Caco-2 (cell line): ENCODE measurements at regions of chr10 and their contacts with region 1.

Region 1: DNA sequence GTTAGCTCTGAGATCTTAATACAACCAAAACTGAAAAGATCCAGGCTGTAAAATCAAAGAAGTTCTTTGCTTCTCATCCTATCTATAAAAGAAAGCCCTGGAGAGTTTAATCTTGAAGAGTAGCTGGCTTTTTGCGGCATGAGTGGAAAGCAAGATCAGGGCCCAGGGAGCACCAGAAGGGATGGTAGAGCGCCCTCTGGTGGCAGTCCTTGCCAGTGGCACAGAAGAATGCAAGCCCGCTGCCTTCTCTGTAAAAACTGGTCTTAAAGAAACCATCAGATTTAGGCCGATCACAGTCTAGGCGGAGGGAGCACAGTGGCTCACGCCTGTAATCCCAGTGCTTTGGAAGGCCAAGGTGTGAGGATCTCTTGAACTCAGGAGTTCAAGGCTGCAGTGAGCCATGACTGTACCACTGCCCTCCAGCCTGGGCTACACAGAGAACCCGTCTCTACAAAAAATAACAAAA is 35.6 kb downstream of the CPN1 start:
- DNase-seq: peak; percentile 84 to 87
- H3K4me3 ChIP-seq: no peak overlapping the region
- H3K4me3 Mint-ChIP-seq: no peak overlapping the region
- H3K27ac Mint-ChIP-seq: no peak overlapping the region
- H3K4me1 ChIP-seq: 0 out of 2 replicates have a peak, but pooled peaks cover 11% of the 10 kb centered on the region
- H3K4me1 Mint-ChIP-seq: peaks cover 7% of the 10 kb centered on the region
- H3K27me3 ChIP-seq: no peaks in the 10 kb centered on the region
- H3K27me3 Mint-ChIP-seq: no peaks in the 10 kb centered on the region
- CTCF ChIP-seq: peak; percentile 95 to 97

Region 2: GRCh38 chr10:99845837-99846382 is 200.1 kb before region 1 on chr10:
- CTCF ChIA-PET with region 1: interaction called, 16 read pairs
- POLR2A ChIA-PET with region 1: no interaction called
- intact Hi-C with region 1: loop called (anchors 1 kb)
- DNase-seq: peak; percentile 74 to 75
- H3K4me3 ChIP-seq: no peak overlapping the region
- H3K4me3 Mint-ChIP-seq: no peak overlapping the region
- H3K27ac Mint-ChIP-seq: no peak overlapping the region
- H3K4me1 ChIP-seq: peaks cover 19% of the 10 kb centered on the region
- H3K4me1 Mint-ChIP-seq: peaks cover 17% of the 10 kb centered on the region
- H3K27me3 ChIP-seq: no peaks in the 10 kb centered on the region
- H3K27me3 Mint-ChIP-seq: no peaks in the 10 kb centered on the region
- CTCF ChIP-seq: peak; percentile 84 to 86

Region 3: DNA sequence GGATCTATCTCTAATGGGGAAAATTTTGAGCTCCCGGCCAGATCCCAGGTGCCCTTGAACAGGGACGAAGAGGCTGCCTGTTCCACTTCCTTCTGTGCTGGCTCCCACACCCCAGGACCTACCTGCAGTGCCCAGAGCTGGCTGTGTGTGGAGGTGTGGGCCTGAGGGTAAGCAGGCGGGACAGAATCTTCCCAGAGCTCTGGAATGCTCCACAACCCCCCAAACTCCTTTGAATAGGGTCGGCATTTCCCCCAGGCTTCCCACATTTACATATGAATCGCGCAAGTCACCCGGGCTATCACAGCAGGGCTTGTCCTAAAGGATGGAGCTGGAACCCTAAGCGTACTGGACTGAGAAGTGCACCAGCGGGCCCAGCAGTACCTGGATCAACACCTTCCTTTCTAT is 132.2 kb before region 1 on chr10:
- CTCF ChIA-PET with region 1: interaction called, 5 read pairs
- POLR2A ChIA-PET with region 1: no interaction called
- intact Hi-C with region 1: loop called (anchors 2 kb)
- DNase-seq: peak; percentile 33 to 53
- H3K4me3 ChIP-seq: no peak overlapping the region
- H3K4me3 Mint-ChIP-seq: no peak overlapping the region
- H3K27ac Mint-ChIP-seq: no peak overlapping the region
- H3K4me1 ChIP-seq: 0 out of 2 replicates have a peak, but pooled peaks cover 9% of the 10 kb centered on the region
- H3K4me1 Mint-ChIP-seq: peaks cover 20% of the 10 kb centered on the region
- H3K27me3 ChIP-seq: no peaks in the 10 kb centered on the region
- H3K27me3 Mint-ChIP-seq: no peaks in the 10 kb centered on the region
- CTCF ChIP-seq: peak in 1 of 2 experiments; percentile 51

Region 4: DNA sequence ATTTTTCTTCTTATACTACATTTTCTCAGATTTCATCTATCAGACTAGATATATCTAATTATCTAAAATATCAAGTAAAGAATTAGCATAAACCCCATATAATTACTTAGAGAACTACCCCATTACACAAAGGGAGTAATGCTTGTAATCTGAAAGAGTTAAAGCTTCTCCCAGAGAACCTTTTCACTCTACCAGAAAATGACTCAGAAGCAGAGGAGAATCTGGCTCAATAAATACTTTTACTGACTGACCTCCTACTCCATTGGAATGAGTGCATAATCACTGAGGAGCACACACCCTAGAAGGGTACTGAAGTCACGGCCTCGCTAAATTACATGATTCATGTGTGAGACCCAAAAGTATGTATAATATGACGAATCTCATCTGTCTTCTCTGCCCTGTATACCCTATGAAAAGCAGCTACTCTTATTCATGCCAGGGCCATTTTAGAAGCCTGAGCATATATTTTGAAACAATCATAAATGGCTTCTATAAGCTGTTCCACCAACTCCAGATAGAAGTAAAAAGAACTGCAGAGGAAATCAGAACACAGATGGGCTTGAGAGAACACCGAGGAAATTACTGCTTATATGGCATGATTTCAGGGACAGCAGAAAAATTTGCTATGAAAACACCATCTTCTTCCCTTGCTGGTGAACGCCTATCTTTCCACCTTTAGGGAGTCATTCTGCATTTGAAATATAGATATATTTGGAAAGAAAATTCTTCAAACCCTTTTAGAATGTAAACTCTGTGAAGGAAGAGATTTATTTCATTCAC is 69.0 kb before region 1 on chr10:
- CTCF ChIA-PET with region 1: interaction called, 11 read pairs
- POLR2A ChIA-PET with region 1: no interaction called
- intact Hi-C with region 1: loop called (anchors 1 kb)
- DNase-seq: peak in 1 of 2 experiments; percentile 14
- H3K4me3 ChIP-seq: no peak overlapping the region
- H3K4me3 Mint-ChIP-seq: no peak overlapping the region
- H3K27ac Mint-ChIP-seq: peak overlapping the region; percentile 33
- H3K4me1 ChIP-seq: peaks cover 28% of the 10 kb centered on the region; the same call in 1 of the 2 replicates
- H3K4me1 Mint-ChIP-seq: peaks cover 11% of the 10 kb centered on the region
- H3K27me3 ChIP-seq: no peaks in the 10 kb centered on the region
- H3K27me3 Mint-ChIP-seq: no peaks in the 10 kb centered on the region
- CTCF ChIP-seq: no peak

Region 5: GRCh38 chr10:100020142-100020885 is 25.7 kb before region 1 on chr10:
- CTCF ChIA-PET with region 1: interaction called, 11 read pairs
- POLR2A ChIA-PET with region 1: no interaction called
- intact Hi-C with region 1: loop called (anchors 1 kb)
- DNase-seq: no peak
- H3K4me3 ChIP-seq: no peak overlapping the region
- H3K4me3 Mint-ChIP-seq: peak overlapping the region; percentile 60
- H3K27ac Mint-ChIP-seq: peak overlapping the region; percentile 27
- H3K4me1 ChIP-seq: peaks cover 25% of the 10 kb centered on the region
- H3K4me1 Mint-ChIP-seq: peaks cover 15% of the 10 kb centered on the region
- H3K27me3 ChIP-seq: no peaks in the 10 kb centered on the region
- H3K27me3 Mint-ChIP-seq: no peaks in the 10 kb centered on the region
- CTCF ChIP-seq: no peak

Region 6: DNA sequence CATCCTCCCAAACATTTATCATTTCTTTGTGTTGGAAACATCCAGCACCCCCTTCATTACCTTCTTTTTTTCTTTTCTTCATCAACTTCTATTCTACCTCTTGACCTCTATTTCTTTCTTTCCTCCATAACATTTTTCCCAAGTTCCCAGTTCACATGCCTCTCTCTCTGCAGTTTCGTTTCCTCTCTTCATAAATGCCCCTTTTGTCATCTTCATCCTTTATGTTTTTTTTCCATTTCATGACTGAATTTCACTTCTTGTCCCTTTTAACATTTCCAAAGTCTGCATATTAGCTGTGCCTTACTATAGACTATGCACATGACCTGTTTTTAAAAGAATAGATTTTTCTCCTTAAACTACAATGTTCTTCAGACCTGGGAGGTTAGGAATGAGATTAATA is 11.9 kb after region 1 on chr10:
- CTCF ChIA-PET with region 1: no interaction called
- POLR2A ChIA-PET with region 1: no interaction called
- intact Hi-C with region 1: no loop called
- DNase-seq: no peak
- H3K4me3 ChIP-seq: no peak overlapping the region
- H3K4me3 Mint-ChIP-seq: no peak overlapping the region
- H3K27ac Mint-ChIP-seq: no peak overlapping the region
- H3K4me1 ChIP-seq: no peaks in the 10 kb centered on the region
- H3K4me1 Mint-ChIP-seq: no peaks in the 10 kb centered on the region
- H3K27me3 ChIP-seq: no peaks in the 10 kb centered on the region
- H3K27me3 Mint-ChIP-seq: no peaks in the 10 kb centered on the region
- CTCF ChIP-seq: no peak

Region 7: DNA sequence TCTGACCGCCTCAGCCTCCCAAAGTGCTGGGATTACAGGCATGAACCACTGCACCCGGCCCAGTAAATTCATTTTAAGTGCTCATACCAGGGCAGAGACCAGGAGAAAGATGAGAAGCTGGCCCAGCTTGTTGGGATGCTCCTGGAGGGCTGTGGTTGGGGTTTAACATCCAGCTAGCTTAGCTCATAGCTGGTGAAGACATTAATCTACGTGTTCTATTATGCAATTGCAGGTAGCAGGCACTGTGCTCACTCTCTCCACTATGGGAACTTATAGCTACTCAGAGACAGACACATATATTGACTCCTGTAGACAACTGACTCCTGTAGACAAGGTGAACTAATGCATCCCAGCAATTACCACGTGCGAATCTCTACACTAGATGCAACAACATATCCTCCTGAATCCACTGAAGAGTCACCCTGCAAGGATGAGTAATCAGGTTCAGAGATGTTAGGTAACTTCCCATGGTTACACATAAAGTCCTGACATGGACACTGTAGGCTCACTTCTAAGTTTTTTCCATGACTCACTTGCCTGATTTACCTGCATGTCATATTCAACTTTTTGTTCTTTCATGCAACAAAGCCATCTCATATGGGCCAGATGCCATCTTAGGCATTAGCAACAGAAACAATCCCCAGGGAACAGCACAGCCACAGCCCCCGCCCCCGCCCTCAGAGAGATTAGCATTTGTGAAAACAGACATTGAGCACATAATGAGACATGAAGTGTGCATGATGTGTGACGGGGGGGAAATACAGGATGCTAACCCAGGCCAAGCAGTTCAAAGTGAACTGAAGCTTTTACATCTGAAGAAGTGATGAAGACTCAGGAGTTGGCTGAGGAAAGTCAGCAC is 102.5 kb after region 1 on chr10:
- CTCF ChIA-PET with region 1: no interaction called
- POLR2A ChIA-PET with region 1: no interaction called
- intact Hi-C with region 1: no loop called
- DNase-seq: no peak
- H3K4me3 ChIP-seq: no peak overlapping the region
- H3K4me3 Mint-ChIP-seq: no peak overlapping the region
- H3K27ac Mint-ChIP-seq: no peak overlapping the region
- H3K4me1 ChIP-seq: 0 out of 2 replicates have a peak, but pooled peaks cover under 1% of the 10 kb centered on the region
- H3K4me1 Mint-ChIP-seq: peaks cover 6% of the 10 kb centered on the region
- H3K27me3 ChIP-seq: no peaks in the 10 kb centered on the region
- H3K27me3 Mint-ChIP-seq: peaks cover 4% of the 10 kb centered on the region
- CTCF ChIP-seq: no peak